ENCODE measurements at regions of chr11 and their contacts with region 1.

Region 1: DNA sequence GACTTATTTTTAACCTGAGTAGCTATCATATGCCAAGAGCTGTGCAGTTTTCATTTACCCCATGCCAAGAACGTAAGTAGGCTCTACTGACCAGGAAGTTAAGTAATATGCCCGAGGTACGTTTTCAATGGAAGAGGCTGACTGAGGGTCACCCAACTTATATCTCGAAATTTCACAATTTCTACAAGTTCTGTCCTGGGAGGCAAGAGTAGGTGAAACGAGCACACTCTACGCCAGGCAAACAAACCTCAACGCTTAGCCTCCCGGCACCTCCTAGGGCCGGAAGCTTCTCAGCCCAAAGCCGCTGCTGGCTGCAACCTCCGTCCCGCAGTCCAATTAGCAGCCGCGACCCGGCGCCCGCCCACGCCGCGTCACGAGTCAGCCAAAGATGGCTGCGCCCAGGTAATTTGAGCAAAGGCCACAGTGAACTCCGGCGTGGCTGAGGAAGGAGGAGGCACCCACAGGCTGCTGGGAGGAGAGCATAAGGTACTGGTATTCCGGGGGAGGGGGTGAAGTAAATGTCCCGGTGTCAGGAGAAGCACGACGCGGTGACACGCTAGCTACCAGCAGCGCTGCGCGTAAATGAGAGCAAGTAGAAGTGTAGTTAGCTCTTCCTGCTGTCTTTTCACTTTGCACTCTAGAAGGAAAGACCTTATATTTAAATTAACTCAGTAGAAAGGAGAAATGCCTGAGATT is at the start of gene TMEM126A:
- DNase-seq: peak; percentile 94
- ATAC-seq: peak; percentile 99
- H3K4me3 Mint-ChIP-seq: peak within 1 kb of the TSS; percentile 88
- H3K27ac Mint-ChIP-seq: peak within 1 kb of the TSS; percentile 95
- H3K4me1 Mint-ChIP-seq: peaks cover 35% of the 10 kb centered on the region
- H3K27me3 Mint-ChIP-seq: peaks cover 21% of the 10 kb centered on the region
- total RNA-seq, gene TMEM126A: 33.7 to 39.8 TPM

Region 2: DNA sequence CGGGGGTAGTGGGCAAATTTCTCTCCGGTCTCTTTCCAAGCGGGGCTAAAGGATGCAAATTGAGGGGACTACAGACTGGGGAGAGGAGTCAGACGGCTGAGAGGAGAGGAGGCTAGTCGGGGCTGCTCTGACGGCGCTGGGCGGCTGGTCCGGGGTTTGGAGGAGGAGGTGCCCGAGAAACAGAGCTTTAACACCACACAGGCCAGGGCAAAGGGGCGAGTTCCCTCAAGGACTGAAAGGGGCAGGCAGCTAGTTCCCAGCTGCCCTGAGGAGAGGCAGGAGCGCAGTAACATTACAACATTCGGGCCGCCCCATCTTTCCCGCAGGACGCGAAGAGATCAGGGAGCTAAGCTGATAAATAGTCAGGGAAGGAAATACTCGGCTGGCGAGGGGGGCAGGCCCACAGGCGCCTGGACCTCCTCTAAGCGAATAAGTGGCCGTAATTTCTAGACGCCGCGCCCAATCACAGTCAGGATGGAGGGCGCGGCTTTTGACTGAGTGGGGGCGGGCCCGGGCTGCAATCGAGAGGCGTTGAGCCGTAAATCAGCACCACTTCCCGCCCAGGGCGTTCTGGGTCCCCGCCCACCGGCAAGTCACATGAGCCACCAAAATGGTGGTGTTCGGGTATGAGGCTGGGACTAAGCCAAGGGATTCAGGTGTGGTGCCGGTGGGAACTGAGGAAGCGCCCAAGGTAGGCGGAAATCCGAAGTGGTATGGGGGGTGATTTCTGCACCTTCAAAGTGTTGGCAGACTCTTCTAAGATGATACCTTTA is 19.6 kb before region 1 on chr11 and contains the start of gene TMEM126B:
- CTCF ChIA-PET with region 1: interaction called, 31 read pairs
- POLR2A ChIA-PET with region 1: interaction called, 34 read pairs
- DNase-seq: peak; percentile 99
- ATAC-seq: peak; percentile 99
- H3K4me3 Mint-ChIP-seq: peak within 1 kb of the TSS; percentile 99
- H3K27ac Mint-ChIP-seq: peak within 1 kb of the TSS; percentile 91
- H3K4me1 Mint-ChIP-seq: peaks cover 40% of the 10 kb centered on the region
- H3K27me3 Mint-ChIP-seq: peaks cover 4% of the 10 kb centered on the region
- total RNA-seq, gene TMEM126B: 51.4 to 57.8 TPM

Region 3: DNA sequence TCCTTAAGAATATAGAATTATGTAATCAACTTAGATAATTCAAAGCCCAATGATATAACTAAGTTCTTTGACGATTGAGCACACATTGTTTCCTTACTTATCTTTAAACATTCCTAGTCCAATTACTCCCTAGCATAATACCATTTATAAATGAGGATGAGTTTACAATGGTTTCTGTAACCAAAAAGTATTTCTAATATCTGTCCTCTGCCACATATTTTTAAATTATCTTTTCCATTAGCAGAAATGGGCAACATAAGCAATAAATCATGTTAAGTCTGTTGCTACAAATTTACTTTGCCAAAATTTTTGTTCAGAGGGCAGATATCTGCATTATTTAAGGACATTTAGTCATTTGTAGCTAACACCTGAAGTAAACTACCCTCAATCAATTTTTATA is 10.4 kb after region 1 on chr11:
- CTCF ChIA-PET with region 1: interaction called, 26 read pairs
- POLR2A ChIA-PET with region 1: interaction called, 41 read pairs
- DNase-seq: no peak
- ATAC-seq: no peak
- H3K4me3 Mint-ChIP-seq: no peak overlapping the region
- H3K27ac Mint-ChIP-seq: no peak overlapping the region
- H3K4me1 Mint-ChIP-seq: peaks cover 51% of the 10 kb centered on the region
- H3K27me3 Mint-ChIP-seq: no peaks in the 10 kb centered on the region

Region 4: GRCh38 chr11:85810871-85811611 is 163.3 kb after region 1 on chr11 and contains the start of gene SYTL2:
- CTCF ChIA-PET with region 1: no interaction called
- POLR2A ChIA-PET with region 1: interaction called, 12 read pairs
- DNase-seq: peak; percentile 77
- ATAC-seq: peak; percentile 97
- H3K4me3 Mint-ChIP-seq: peak within 1 kb of the TSS; percentile 87
- H3K27ac Mint-ChIP-seq: peak within 1 kb of the TSS; percentile 78
- H3K4me1 Mint-ChIP-seq: peaks cover 39% of the 10 kb centered on the region
- H3K27me3 Mint-ChIP-seq: peaks cover 20% of the 10 kb centered on the region
- total RNA-seq, gene SYTL2: 29.3 to 31.2 TPM

Measured in activated CD8-positive, alpha-beta T cell treated with anti-CD3 and anti-CD28 coated beads, Interleukin-2, amount 10 ng/mL, durations not matched to agents 7 days and 5 days (primary cell).